H1 (cell line): ENCODE measurements at regions of chr4 and their contacts with region 1.

Region 1: DNA sequence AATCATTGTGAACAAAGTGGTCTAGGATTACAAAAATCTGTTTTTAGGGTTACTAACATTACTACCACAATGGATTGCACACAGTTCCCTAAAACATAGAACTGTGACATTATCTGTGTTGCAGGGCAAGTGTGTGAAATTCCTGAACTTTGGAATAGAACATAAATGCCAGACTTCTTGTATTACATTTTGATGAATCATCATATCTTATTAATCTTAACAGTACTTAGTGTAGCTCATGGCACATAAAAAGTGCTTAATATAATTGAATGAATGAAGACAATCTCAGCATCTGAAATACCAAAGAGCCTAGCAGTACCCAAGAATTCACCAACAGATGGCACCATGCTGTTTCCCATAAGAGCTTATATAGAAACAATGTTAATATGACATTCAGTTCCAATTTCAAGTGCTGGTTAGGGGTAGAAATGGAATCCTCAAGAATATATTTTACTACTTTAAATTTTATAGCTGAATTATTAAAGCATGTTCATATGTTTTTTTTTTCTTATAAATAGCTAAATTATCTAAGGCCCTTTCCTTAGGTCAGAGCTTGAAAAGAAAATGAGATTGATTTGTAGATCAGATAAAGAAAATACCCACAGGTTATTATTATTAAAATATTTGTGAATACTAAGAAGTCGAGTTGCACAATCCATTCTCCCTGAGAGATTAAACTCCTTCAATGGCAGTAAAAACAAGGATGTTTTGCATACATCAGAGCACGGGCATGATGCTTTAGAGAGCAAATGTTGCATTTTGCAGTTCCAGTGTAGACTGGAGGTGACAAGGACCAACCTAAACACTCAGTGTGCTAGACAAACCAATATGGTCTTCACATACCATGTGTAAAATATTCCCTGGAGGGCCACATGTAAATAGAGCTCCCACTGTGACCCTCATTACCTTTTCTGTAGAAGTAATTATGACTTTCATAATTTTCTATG is 25.7 kb upstream of the SHISA3 start:
- DNase-seq: no peak
- H3K4me3 ChIP-seq: no peak overlapping the region
- H3K27ac ChIP-seq: no peak overlapping the region
- H3K4me1 ChIP-seq: no peaks in the 10 kb centered on the region; a peak in 1 of 7 replicates
- H3K27me3 ChIP-seq: 0 out of 7 replicates have a peak, but pooled peaks cover 0 to 2% (median 0%) of the 10 kb centered on the region in 4 experiments
- CTCF ChIP-seq: peak in 2 of 3 experiments; percentile 6 to 40; a peak in 2 of 4 replicates
- EP300 ChIP-seq: no peak
- POLR2A ChIP-seq: no peak
- RAD21 ChIP-seq: peak; percentile 59 to 62

Region 2: DNA sequence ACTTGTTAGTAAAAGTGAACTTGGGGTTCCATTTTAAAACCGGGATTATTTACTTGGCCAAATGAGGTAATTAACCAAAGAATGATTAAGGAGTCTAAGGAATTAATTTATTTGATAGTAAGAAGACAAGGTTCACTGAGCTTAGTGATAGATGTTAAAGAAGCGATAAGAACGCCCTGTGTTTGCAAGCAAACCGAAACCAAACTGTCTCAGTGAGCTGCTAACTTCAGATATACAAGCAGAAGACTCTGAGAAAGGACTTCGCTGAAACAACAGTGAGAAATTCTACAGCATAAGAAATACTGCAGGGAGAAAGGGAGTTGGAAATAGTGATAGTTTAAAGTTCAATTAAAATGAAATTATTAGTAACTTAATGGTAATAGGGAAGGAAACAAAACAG is 11.9 kb before region 1 on chr4:
- CTCF ChIA-PET with region 1: interaction called, 22 read pairs
- POLR2A ChIA-PET with region 1: no interaction called
- DNase-seq: no peak
- H3K4me3 ChIP-seq: no peak overlapping the region
- H3K27ac ChIP-seq: no peak overlapping the region
- H3K4me1 ChIP-seq: no peaks in the 10 kb centered on the region
- H3K27me3 ChIP-seq: peaks cover 0 to 1% (median 0%) of the 10 kb centered on the region in 4 experiments; a peak in 1 of 7 replicates
- CTCF ChIP-seq: no peak
- EP300 ChIP-seq: no peak
- POLR2A ChIP-seq: no peak
- RAD21 ChIP-seq: no peak

Region 3: GRCh38 chr4:42513748-42514492 is 142.3 kb after region 1 on chr4:
- CTCF ChIA-PET with region 1: interaction called, 82 read pairs
- POLR2A ChIA-PET with region 1: no interaction called
- DNase-seq: no peak
- H3K4me3 ChIP-seq: no peak overlapping the region
- H3K27ac ChIP-seq: no peak overlapping the region
- H3K4me1 ChIP-seq: peaks cover 2 to 11% (median 7%) of the 10 kb centered on the region in 4 experiments; a peak in 3 of 7 replicates
- H3K27me3 ChIP-seq: peaks cover 0 to 6% (median under 1%) of the 10 kb centered on the region in 4 experiments; a peak in 4 of 7 replicates
- CTCF ChIP-seq: no peak
- EP300 ChIP-seq: no peak
- POLR2A ChIP-seq: no peak
- RAD21 ChIP-seq: no peak